CD8-positive, alpha-beta T cell (primary cell): ENCODE measurements at regions of chr5 and their contacts with region 1.

Region 1: GRCh38 chr5:159106569-159107282 is 7.0 kb upstream of the EBF1 start:
- DNase-seq: peak; percentile 42 to 84 (median 69)
- ATAC-seq: peak; percentile 81
- H3K4me3 ChIP-seq: peak overlapping the region; percentile 22 to 44
- H3K4me3 Mint-ChIP-seq: peak overlapping the region; percentile 74
- H3K27ac ChIP-seq: no peak overlapping the region
- H3K27ac Mint-ChIP-seq: no peak overlapping the region
- H3K4me1 ChIP-seq: peaks cover 14% of the 10 kb centered on the region
- H3K4me1 Mint-ChIP-seq: peaks cover 26% of the 10 kb centered on the region
- H3K27me3 ChIP-seq: peaks cover 9 to 29% of the 10 kb centered on the region in 2 experiments
- H3K27me3 Mint-ChIP-seq: peaks cover 51% of the 10 kb centered on the region
- CTCF ChIP-seq: peak; percentile 93

Region 2: GRCh38 chr5:157820593-157821252 is 1286.0 kb before region 1 on chr5:
- CTCF ChIA-PET with region 1: interaction called, 4 read pairs
- POLR2A ChIA-PET with region 1: no interaction called
- intact Hi-C with region 1: loop called in 1 of 2 experiments (anchors 1 kb)
- DNase-seq: peak in 3 of 9 experiments; percentile 15 to 62 (median 48)
- ATAC-seq: no peak
- H3K4me3 ChIP-seq: no peak overlapping the region
- H3K4me3 Mint-ChIP-seq: no peak overlapping the region
- H3K27ac ChIP-seq: no peak overlapping the region
- H3K27ac Mint-ChIP-seq: no peak overlapping the region
- H3K4me1 ChIP-seq: no peaks in the 10 kb centered on the region
- H3K4me1 Mint-ChIP-seq: peaks cover 34% of the 10 kb centered on the region
- H3K27me3 ChIP-seq: no peaks in the 10 kb centered on the region
- H3K27me3 Mint-ChIP-seq: no peaks in the 10 kb centered on the region
- CTCF ChIP-seq: peak; percentile 26

Region 3: GRCh38 chr5:158174918-158175851 is 931.5 kb before region 1 on chr5:
- CTCF ChIA-PET with region 1: interaction called, 60 read pairs
- POLR2A ChIA-PET with region 1: no interaction called
- intact Hi-C with region 1: loop called in 1 of 2 experiments (anchors 1 kb)
- DNase-seq: peak; percentile 10 to 66 (median 46)
- ATAC-seq: peak; percentile 44
- H3K4me3 ChIP-seq: no peak overlapping the region
- H3K4me3 Mint-ChIP-seq: no peak overlapping the region
- H3K27ac ChIP-seq: no peak overlapping the region
- H3K27ac Mint-ChIP-seq: no peak overlapping the region
- H3K4me1 ChIP-seq: no peaks in the 10 kb centered on the region
- H3K4me1 Mint-ChIP-seq: peaks cover 3% of the 10 kb centered on the region
- H3K27me3 ChIP-seq: no peaks in the 10 kb centered on the region
- H3K27me3 Mint-ChIP-seq: no peaks in the 10 kb centered on the region
- CTCF ChIP-seq: peak; percentile 56

Region 4: DNA sequence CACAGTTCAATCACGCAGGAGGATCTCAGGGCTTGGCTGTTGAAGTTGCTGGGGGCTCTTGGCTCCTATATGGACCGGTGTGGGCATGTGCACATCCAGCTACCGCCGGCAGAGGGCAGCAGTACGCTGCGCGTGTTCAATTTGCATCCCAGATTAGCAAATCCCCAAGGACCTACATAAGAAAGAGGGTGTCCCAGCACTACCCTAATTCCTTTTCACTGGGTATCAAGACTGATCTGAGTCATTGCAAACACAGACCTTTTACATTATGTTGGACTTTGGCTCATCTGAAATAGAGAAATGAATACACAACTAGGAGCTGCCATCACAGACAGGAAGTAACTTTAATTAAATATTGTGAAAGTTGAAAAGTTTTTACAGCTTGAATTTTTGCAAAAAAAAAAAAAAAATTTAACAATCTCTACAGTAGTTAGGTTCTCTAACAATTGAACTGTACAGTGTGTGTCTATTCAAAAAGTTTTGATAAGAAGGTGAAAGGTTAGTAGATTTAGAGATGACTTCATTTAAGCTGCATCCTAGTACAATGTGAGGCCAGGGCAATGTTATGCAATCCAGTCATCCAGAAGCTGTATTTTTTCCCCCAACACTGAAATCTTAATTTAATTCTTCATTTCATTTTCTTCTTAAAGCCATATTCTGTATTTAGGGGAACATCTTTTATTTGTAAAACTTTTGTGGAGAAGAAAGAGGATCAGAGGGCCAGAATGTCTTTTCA is 411.0 kb before region 1 on chr5:
- CTCF ChIA-PET with region 1: interaction called, 305 read pairs
- POLR2A ChIA-PET with region 1: interaction called, 6 read pairs
- intact Hi-C with region 1: loop called (anchors 1 kb)
- DNase-seq: peak; percentile 21 to 83 (median 71)
- ATAC-seq: peak; percentile 78
- H3K4me3 ChIP-seq: no peak overlapping the region
- H3K4me3 Mint-ChIP-seq: no peak overlapping the region
- H3K27ac ChIP-seq: no peak overlapping the region
- H3K27ac Mint-ChIP-seq: no peak overlapping the region
- H3K4me1 ChIP-seq: no peaks in the 10 kb centered on the region
- H3K4me1 Mint-ChIP-seq: peaks cover 3% of the 10 kb centered on the region
- H3K27me3 ChIP-seq: peaks cover 0 to 2% of the 10 kb centered on the region in 2 experiments
- H3K27me3 Mint-ChIP-seq: peaks cover 3% of the 10 kb centered on the region
- CTCF ChIP-seq: peak; percentile 97

Region 5: DNA sequence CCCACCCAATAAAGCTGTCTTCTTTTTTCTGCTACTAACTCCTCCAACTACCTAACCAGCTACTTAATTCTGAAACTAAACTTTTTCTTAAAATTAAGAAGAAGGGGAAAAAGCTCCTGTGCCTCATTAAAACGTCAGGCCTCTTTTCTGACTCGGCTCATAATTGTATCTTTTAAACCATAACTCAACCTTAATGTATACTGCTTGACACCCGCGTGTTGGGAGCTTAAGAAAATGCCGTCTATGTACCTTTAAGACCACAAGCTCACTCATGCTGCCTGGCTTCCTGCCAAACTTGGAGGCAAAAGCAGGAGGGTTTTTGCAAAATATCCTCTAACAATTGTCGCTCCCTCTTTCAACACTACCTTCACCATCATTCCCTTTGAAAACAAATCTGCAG is 12.0 kb before region 1 on chr5:
- CTCF ChIA-PET with region 1: interaction called, 25 read pairs
- POLR2A ChIA-PET with region 1: interaction called, 3 read pairs
- intact Hi-C with region 1: no loop called
- DNase-seq: peak in 8 of 9 experiments; percentile 32 to 80 (median 62)
- ATAC-seq: no peak
- H3K4me3 ChIP-seq: no peak overlapping the region
- H3K4me3 Mint-ChIP-seq: peak overlapping the region; percentile 20
- H3K27ac ChIP-seq: no peak overlapping the region
- H3K27ac Mint-ChIP-seq: no peak overlapping the region
- H3K4me1 ChIP-seq: peaks cover 30% of the 10 kb centered on the region
- H3K4me1 Mint-ChIP-seq: peaks cover 28% of the 10 kb centered on the region
- H3K27me3 ChIP-seq: peaks cover 15 to 27% of the 10 kb centered on the region in 2 experiments
- H3K27me3 Mint-ChIP-seq: peaks cover 43% of the 10 kb centered on the region
- CTCF ChIP-seq: no peak

Region 6: GRCh38 chr5:159133041-159133741 is 26.5 kb after region 1 on chr5:
- CTCF ChIA-PET with region 1: interaction called, 36 read pairs
- POLR2A ChIA-PET with region 1: no interaction called
- intact Hi-C with region 1: loop called in 1 of 2 experiments (anchors 1 kb)
- DNase-seq: peak in 2 of 9 experiments; percentile 52 to 61
- ATAC-seq: peak; percentile 40
- H3K4me3 ChIP-seq: no peak overlapping the region
- H3K4me3 Mint-ChIP-seq: no peak overlapping the region
- H3K27ac ChIP-seq: no peak overlapping the region
- H3K27ac Mint-ChIP-seq: no peak overlapping the region
- H3K4me1 ChIP-seq: no peaks in the 10 kb centered on the region
- H3K4me1 Mint-ChIP-seq: no peaks in the 10 kb centered on the region
- H3K27me3 ChIP-seq: no peaks in the 10 kb centered on the region
- H3K27me3 Mint-ChIP-seq: peaks cover 9% of the 10 kb centered on the region
- CTCF ChIP-seq: peak; percentile 88